ENCODE measurements at regions of chr11 and their contacts with region 1.

Region 1: DNA sequence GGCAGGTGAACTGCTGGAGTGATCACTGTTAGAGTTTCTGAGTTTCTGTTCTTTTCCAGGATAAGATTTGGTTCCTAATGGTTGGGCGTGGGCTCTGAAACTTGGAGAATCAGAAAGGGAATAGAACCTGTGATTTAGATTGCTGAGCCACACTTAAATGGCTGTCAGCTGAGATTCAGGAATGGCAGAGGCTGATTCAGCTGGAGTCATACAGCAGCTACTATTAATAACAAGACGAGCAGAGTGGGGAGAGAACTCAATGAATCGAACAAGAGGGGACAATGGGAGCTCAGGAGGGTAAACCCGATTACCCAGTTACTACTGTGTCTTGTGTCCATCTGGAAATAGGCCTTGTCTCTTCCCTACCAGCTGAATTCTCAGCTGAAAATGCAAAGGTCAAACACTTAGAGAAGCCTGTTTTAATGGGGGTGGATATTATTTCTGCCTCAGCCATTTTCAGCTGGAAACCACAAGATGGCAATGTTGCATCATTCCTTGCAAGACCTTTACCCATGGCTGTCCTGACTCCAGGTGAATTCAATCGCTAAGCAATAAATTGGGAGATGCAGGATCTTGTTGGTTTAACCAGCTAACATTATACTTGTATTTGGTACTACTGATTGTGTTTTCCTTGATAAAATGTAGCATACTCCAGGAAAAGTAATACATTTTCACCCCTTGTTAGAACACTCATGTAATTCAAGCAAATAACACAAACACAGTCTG is 104.5 kb upstream of the RAG2 start:
- DNase-seq: peak in 1 of 3 donors; percentile 49
- ATAC-seq: peak; percentile 87
- H3K4me3 ChIP-seq: no peak overlapping the region
- H3K4me1 ChIP-seq: peaks cover 4% of the 10 kb centered on the region
- CTCF ChIP-seq: peak; percentile 46

Region 2: GRCh38 chr11:36411202-36411640 is 291.3 kb before region 1 on chr11:
- intact Hi-C with region 1: no loop called
- DNase-seq: peak in 2 of 3 donors; percentile 25 to 54
- ATAC-seq: peak; percentile 76
- H3K4me3 ChIP-seq: no peak overlapping the region
- H3K4me1 ChIP-seq: peaks cover 3% of the 10 kb centered on the region
- CTCF ChIP-seq: no peak

Region 3: DNA sequence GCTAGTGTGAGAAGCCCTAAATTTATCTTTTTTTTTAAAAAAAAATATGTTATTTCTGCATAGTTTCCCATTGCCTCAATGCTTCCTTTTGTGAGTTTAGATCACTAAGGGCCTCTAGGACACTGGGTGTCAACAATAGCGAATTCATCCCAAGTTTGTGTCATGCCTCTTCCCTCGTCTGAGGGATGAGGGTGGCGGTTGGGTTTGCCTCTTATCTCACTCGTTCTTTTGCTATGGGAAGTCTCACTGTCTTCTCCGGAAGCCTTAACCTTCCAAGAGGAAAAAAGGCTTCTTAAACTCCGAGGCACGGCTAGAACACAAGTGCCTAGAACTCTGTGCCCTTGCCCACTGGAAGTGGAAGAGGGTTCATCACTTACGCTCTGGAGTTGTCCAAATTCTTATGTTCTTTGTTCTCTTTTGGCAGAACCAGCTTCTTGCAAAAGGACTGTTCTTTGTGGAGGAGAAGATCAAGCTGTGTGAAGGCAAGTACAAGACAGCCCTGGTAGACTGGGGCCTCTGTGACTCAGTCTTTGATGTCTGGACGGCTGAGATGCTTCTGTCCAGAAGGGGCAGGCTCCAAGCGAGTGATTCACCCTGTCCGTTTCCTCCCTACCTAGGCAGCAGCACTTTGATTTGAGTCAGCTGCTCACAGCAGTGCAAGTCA is 270.9 kb before region 1 on chr11:
- intact Hi-C with region 1: no loop called
- DNase-seq: peak in 1 of 3 donors; percentile 34
- ATAC-seq: peak; percentile 82
- H3K4me3 ChIP-seq: no peak overlapping the region
- H3K4me1 ChIP-seq: no peaks in the 10 kb centered on the region
- CTCF ChIP-seq: no peak

Region 4: DNA sequence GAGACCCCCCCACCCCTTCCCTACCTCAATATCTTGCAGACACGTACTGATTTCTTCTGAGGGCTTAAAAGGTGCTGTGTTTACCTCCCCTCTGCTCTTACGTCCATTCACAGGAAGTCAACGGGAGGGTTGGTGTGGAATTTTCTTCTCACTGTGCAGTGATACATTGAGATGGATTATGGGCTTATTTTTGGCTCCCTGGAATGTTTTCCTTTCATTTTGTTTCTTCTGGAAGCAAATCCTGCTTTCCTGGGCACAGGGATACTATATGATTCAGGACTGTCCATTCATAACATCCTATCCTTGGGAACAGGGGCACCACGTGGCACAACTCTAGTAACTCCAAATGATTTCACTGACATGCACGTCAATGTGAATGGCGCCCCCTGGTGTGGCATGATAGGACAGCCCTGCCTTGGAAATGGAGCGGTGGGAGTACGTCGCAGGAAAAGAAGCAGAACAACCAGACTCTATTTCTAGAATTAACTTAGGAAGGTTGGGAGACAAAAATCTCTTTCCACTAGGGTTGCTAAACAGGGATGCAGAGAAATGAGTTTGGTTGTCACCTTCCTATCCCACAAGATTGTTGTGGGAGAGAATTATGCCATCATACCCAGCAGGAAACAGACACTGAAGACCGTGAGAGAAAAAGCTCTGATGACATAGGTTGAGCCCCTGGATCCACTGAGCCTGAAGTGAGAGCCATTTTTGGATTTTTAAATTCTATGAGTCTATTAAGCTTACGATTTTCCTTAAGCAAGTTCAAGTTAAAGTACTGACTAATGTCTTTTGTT is 42.1 kb after region 1 on chr11:
- intact Hi-C with region 1: loop called in 1 of 2 experiments (anchors 5 kb)
- DNase-seq: peak; percentile 49 to 84 (median 78)
- ATAC-seq: peak; percentile 68
- H3K4me3 ChIP-seq: no peak overlapping the region
- H3K4me1 ChIP-seq: peaks cover 6% of the 10 kb centered on the region
- CTCF ChIP-seq: peak; percentile 55

Region 5: DNA sequence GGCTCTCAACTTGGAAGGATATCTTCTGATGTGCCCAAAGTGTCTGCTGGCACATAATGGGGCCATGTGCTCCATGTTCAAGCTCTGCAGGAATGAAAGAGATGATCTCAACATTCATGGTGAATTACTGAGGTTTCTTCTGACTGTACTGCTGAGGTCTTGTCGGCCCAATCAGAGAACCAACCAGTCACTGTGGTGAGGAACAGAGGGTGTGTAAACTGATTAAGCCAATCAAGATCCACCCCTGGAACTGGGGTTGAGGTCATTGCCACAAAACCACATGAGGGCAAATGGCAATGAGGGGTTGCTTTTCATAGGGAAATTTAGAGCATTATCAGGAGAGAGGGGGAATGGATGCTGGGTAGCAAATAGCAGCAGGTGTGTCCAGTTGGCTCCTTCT is 47.9 kb after region 1 on chr11:
- intact Hi-C with region 1: loop called in 1 of 2 experiments (anchors 5 kb)
- DNase-seq: no peak
- ATAC-seq: no peak
- H3K4me3 ChIP-seq: no peak overlapping the region
- H3K4me1 ChIP-seq: peaks cover 4% of the 10 kb centered on the region
- CTCF ChIP-seq: no peak